ENCODE measurements at regions of chr1 and their contacts with region 1.

Region 1: DNA sequence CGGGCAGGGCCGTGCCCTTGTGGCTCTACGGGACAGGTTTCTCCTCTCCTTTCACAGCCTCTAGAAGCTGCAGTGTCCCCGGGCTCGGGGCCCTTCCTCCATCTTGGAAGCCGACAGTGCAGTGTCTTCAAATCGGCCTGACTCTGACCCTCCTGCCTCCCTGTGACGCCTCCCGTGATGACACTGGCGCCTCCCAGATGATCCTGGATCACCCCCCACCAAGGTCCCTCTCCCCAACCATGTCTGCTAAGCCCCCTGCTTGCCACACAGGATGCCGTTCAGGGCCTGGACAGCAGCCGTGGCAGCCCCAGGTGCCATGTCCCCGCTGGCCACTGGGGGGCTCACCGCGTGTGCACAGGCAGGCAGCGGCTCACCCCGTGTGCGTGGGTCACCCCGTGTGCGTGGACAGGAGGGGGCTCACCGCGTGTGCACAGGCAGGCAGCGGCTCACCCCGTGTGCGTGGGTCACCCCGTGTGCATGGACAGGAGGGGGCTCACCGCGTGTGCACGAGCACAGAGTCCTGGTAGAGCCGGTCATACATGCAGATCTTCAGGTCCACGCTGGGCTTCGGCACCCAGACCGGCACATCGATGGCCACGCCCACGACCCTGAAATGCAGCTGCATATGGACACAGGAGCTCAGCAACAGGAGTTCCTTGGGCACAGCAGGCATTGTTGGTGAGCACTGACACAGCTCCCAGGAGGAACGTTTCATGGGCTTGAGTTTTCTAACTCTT is 24.9 kb upstream of the TMEM52 start:
- DNase-seq: peak; percentile 29 to 73 (median 66)
- H3K4me3 ChIP-seq: peak overlapping the region in 3 of 7 experiments; percentile 10 to 59 (median 49)
- H3K27ac ChIP-seq: no peak overlapping the region
- H3K4me1 ChIP-seq: peaks cover 0 to 5% (median 4%) of the 10 kb centered on the region in 4 experiments
- H3K27me3 ChIP-seq: peaks cover 0 to 10% (median 2%) of the 10 kb centered on the region in 5 experiments

Region 2: GRCh38 chr1:1954831-1955441 is 10.9 kb after region 1 on chr1:
- CTCF ChIA-PET with region 1: interaction called, 10 read pairs
- POLR2A ChIA-PET with region 1: no interaction called
- DNase-seq: no peak
- H3K4me3 ChIP-seq: no peak overlapping the region
- H3K27ac ChIP-seq: no peak overlapping the region
- H3K4me1 ChIP-seq: peaks cover 0 to 7% (median 2%) of the 10 kb centered on the region in 4 experiments
- H3K27me3 ChIP-seq: peaks cover 0 to 11% (median 2%) of the 10 kb centered on the region in 5 experiments

Measured in common myeloid progenitor, CD34-positive (primary cell).